Activated B cell treated with CpG ODN at 0.5 μM for 24 hours (primary cell): ENCODE measurements at regions of chr6 and their contacts with region 1.

Region 1: GRCh38 chr6:10800829-10801535 is 37.4 kb downstream of the MAK start:
- DNase-seq: peak; percentile 37
- ATAC-seq: peak; percentile 75
- H3K4me3 Mint-ChIP-seq: no peak overlapping the region
- H3K27ac Mint-ChIP-seq: no peak overlapping the region
- H3K4me1 Mint-ChIP-seq: no peaks in the 10 kb centered on the region
- H3K27me3 Mint-ChIP-seq: no peaks in the 10 kb centered on the region
- CTCF ChIP-seq: peak; percentile 98

Region 2: GRCh38 chr6:10478187-10479040 is 322.6 kb before region 1 on chr6:
- CTCF ChIA-PET with region 1: interaction called, 89 read pairs
- POLR2A ChIA-PET with region 1: no interaction called
- intact Hi-C with region 1: loop called (anchors 1 kb)
- DNase-seq: no peak
- ATAC-seq: peak; percentile 42
- H3K4me3 Mint-ChIP-seq: no peak overlapping the region
- H3K27ac Mint-ChIP-seq: no peak overlapping the region
- H3K4me1 Mint-ChIP-seq: no peaks in the 10 kb centered on the region
- H3K27me3 Mint-ChIP-seq: peaks cover 11% of the 10 kb centered on the region
- CTCF ChIP-seq: no peak